ENCODE measurements at regions of chr2 and their contacts with region 1.

Region 1: GRCh38 chr2:2192091-2192955 is 138.8 kb downstream of the MYT1L start:
- DNase-seq: no peak
- H3K4me3 ChIP-seq: no peak overlapping the region
- H3K27ac ChIP-seq: no peak overlapping the region
- H3K4me1 ChIP-seq: peaks cover 0 to 28% (median 2%) of the 10 kb centered on the region in 4 donors
- H3K27me3 ChIP-seq: no peaks in the 10 kb centered on the region
- CTCF ChIP-seq: no peak
- EP300 ChIP-seq: no peak
- POLR2A ChIP-seq: no peak

Region 2: GRCh38 chr2:2146969-2147900 is 45.1 kb before region 1 on chr2:
- intact Hi-C with region 1: loop called (anchors 2 kb)
- DNase-seq: no peak
- H3K4me3 ChIP-seq: no peak overlapping the region
- H3K27ac ChIP-seq: no peak overlapping the region
- H3K4me1 ChIP-seq: peaks cover 0 to 23% (median 17%) of the 10 kb centered on the region in 4 donors
- H3K27me3 ChIP-seq: no peaks in the 10 kb centered on the region
- CTCF ChIP-seq: no peak
- EP300 ChIP-seq: no peak
- POLR2A ChIP-seq: no peak

Region 3: DNA sequence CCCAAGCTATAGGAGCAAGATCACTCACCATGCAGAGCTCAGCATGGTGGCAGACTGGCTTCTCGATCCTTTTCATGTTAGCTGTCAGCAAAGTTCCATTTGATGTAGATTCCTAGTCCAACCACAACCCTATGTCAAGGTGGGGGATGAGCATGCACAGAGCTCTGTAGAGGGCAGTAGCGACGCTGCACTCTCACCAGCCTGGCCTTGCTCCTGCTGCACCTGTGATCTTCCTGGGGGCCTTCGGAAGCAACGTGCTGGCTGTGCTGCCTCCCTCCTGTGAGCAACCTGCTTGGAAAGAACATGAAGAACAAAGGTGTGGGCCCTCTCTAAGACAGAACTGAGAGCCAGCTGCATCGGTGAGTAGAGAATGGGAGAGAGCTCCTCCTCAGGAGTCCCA is 618.2 kb after region 1 on chr2:
- intact Hi-C with region 1: no loop called
- DNase-seq: no peak
- H3K4me3 ChIP-seq: no peak overlapping the region
- H3K27ac ChIP-seq: no peak overlapping the region
- H3K4me1 ChIP-seq: no peaks in the 10 kb centered on the region
- H3K27me3 ChIP-seq: no peaks in the 10 kb centered on the region
- CTCF ChIP-seq: no peak
- EP300 ChIP-seq: no peak
- POLR2A ChIP-seq: no peak